ENCODE measurements at regions of chr16 and their contacts with region 1.

Region 1: GRCh38 chr16:3173892-3174617 is 13.9 kb upstream of the OR1F1 start:
- DNase-seq: no peak
- H3K4me3 ChIP-seq: no peak overlapping the region
- H3K4me3 Mint-ChIP-seq: peak overlapping the region in 7 of 8 donors; percentile 4 to 58 (median 35)
- H3K27ac ChIP-seq: no peak overlapping the region
- H3K27ac Mint-ChIP-seq: peak overlapping the region in 2 of 7 donors; percentile 17 to 75
- H3K4me1 ChIP-seq: peaks cover 48% of the 10 kb centered on the region
- H3K4me1 Mint-ChIP-seq: peaks cover 18 to 46% (median 35%) of the 10 kb centered on the region in 4 donors
- H3K27me3 ChIP-seq: peaks cover 38% of the 10 kb centered on the region
- H3K27me3 Mint-ChIP-seq: peaks cover 39 to 41% of the 10 kb centered on the region in 2 donors

Region 2: GRCh38 chr16:3023669-3024478 is 150.2 kb before region 1 on chr16 and contains the starts of genes HCFC1R1 and THOC6:
- CTCF ChIA-PET with region 1: interaction called, 25 read pairs
- POLR2A ChIA-PET with region 1: interaction called, 3 read pairs
- intact Hi-C with region 1: no loop called
- DNase-seq: peak; percentile 95 to 97 (median 95)
- H3K4me3 ChIP-seq: peak within 1 kb of the TSS; percentile 38 to 85
- H3K4me3 Mint-ChIP-seq: peak within 1 kb of the TSS; percentile 87 to 97 (median 93)
- H3K27ac ChIP-seq: peak within 1 kb of the TSS; percentile 90
- H3K27ac Mint-ChIP-seq: peak within 1 kb of the TSS; percentile 97 to 99 (median 99)
- H3K4me1 ChIP-seq: peaks cover 56% of the 10 kb centered on the region
- H3K4me1 Mint-ChIP-seq: peaks cover 22 to 67% (median 45%) of the 10 kb centered on the region in 4 donors
- H3K27me3 ChIP-seq: peaks cover 2% of the 10 kb centered on the region
- H3K27me3 Mint-ChIP-seq: no peaks in the 10 kb centered on the region
- total RNA-seq, gene HCFC1R1: 16.0 to 18.0 TPM
- total RNA-seq, gene THOC6: 18.4 to 22.5 TPM

Region 3: DNA sequence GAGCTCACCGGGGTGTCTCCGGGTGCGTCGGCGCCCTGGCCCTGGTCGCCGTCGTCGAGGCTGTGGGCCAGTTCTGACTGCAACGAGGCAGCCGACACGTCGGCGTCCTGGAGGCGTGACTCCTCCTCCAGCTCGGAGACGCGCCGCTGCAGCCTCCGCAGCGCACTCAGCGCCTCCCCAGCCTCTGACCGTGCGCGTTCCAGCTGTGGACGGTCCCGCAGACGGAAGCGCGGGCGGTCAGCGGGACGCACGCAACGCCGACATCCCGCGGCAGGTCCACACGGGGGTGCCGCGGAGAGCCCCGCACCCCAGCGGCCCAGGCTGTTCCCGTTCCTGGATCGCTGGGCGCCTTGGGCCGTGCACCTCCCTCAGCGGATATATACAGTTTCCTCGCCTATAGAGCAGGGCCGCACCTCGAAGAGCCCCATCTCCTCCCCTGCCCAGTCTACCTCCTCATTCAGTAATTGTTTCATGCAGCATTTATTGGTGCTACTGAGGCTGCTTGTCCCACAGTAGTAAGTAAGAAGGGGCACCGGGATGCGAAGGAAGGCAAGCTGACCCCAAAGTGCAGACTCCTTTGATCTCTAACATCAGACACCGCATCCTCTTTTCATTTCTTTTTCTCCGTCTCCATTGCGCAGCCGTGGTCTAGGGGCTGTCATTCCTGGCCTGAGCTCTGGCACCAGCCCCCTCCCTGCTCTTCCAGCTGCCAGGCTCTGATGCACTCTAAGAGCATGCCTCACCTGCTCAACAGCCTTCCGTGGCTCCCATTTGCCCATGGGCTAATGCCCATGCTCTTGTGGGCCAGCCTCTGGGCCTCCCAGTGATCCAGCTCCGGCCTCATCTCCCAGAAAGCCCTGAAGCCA is 144.3 kb before region 1 on chr16:
- CTCF ChIA-PET with region 1: interaction called, 25 read pairs
- POLR2A ChIA-PET with region 1: no interaction called
- intact Hi-C with region 1: no loop called
- DNase-seq: peak in 3 of 5 donors; percentile 36 to 43 (median 37)
- H3K4me3 ChIP-seq: peak overlapping the region in 1 of 2 donors; percentile 41
- H3K4me3 Mint-ChIP-seq: peak overlapping the region; percentile 52 to 88 (median 74)
- H3K27ac ChIP-seq: no peak overlapping the region
- H3K27ac Mint-ChIP-seq: peak overlapping the region in 1 of 7 donors; percentile 81
- H3K4me1 ChIP-seq: peaks cover 25% of the 10 kb centered on the region
- H3K4me1 Mint-ChIP-seq: peaks cover 11 to 32% (median 19%) of the 10 kb centered on the region in 4 donors
- H3K27me3 ChIP-seq: peaks cover 13% of the 10 kb centered on the region
- H3K27me3 Mint-ChIP-seq: peaks cover 22 to 25% of the 10 kb centered on the region in 2 donors

Region 4: GRCh38 chr16:3150346-3151218 is 23.5 kb before region 1 on chr16:
- CTCF ChIA-PET with region 1: interaction called, 15 read pairs
- POLR2A ChIA-PET with region 1: interaction called, 13 read pairs
- intact Hi-C with region 1: no loop called
- DNase-seq: peak; percentile 96 to 99 (median 97)
- H3K4me3 ChIP-seq: peak overlapping the region; percentile 77 to 92
- H3K4me3 Mint-ChIP-seq: peak overlapping the region; percentile 87 to 96 (median 91)
- H3K27ac ChIP-seq: peak overlapping the region; percentile 64
- H3K27ac Mint-ChIP-seq: peak overlapping the region; percentile 87 to 100 (median 95)
- H3K4me1 ChIP-seq: peaks cover 27% of the 10 kb centered on the region
- H3K4me1 Mint-ChIP-seq: peaks cover 22 to 47% (median 26%) of the 10 kb centered on the region in 4 donors
- H3K27me3 ChIP-seq: no peaks in the 10 kb centered on the region
- H3K27me3 Mint-ChIP-seq: peaks cover 3 to 8% of the 10 kb centered on the region in 2 donors

Region 5: DNA sequence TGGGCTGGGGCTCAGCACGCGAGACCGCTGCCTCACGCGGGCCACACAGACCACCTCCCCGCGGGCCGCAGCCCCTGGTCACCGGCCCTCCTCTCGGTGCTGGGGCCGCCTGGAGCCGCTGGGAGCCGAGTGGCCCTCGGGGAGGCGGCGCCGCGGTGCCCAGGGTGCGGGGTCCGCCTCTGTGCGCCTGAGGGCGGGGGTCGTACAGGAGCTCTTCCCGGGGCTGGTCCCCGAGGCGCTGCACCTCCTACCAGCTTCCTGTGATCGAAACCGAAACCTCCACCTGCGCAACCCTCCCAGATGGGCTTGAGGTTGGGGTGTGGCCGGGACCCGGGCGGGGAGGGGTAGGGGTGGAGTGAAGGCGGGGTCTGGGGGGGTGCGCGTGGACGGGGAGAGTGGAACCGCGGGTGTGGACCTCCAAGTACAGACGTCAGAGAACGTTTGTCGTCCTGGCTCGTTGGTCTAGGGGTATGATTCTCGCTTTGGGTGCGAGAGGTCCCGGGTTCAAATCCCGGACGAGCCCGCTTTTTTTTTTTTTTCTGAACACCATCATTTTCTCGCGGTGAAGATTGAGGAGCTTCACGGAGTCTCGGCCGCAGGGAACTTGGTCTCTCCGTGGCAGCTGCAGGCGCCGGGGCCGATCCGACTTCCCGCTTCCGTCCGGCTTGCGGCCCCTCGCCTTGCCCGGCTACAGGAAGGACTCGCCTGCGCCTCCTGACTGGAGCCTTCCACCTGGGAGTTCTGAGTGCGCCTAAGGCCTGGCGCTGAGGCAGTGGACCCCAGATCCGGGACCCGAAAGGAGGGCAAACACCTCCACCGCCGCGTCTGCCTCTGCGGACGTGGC is 15.4 kb before region 1 on chr16:
- CTCF ChIA-PET with region 1: interaction called, 7 read pairs
- POLR2A ChIA-PET with region 1: interaction called, 44 read pairs
- intact Hi-C with region 1: no loop called
- DNase-seq: peak; percentile 92 to 98 (median 94)
- H3K4me3 ChIP-seq: peak overlapping the region; percentile 65 to 66
- H3K4me3 Mint-ChIP-seq: peak overlapping the region; percentile 83 to 96 (median 92)
- H3K27ac ChIP-seq: peak overlapping the region; percentile 62
- H3K27ac Mint-ChIP-seq: peak overlapping the region; percentile 92 to 100 (median 96)
- H3K4me1 ChIP-seq: peaks cover 25% of the 10 kb centered on the region
- H3K4me1 Mint-ChIP-seq: peaks cover 11 to 36% (median 25%) of the 10 kb centered on the region in 4 donors
- H3K27me3 ChIP-seq: no peaks in the 10 kb centered on the region
- H3K27me3 Mint-ChIP-seq: peaks cover 0 to 2% of the 10 kb centered on the region in 2 donors

Region 6: GRCh38 chr16:3188925-3189825 is 15.1 kb after region 1 on chr16:
- CTCF ChIA-PET with region 1: no interaction called
- POLR2A ChIA-PET with region 1: interaction called, 17 read pairs
- intact Hi-C with region 1: loop called (anchors 2 kb)
- DNase-seq: peak in 3 of 5 donors; percentile 44 to 45 (median 44)
- H3K4me3 ChIP-seq: peak overlapping the region; percentile 23 to 44
- H3K4me3 Mint-ChIP-seq: peak overlapping the region; percentile 48 to 84 (median 82)
- H3K27ac ChIP-seq: no peak overlapping the region
- H3K27ac Mint-ChIP-seq: peak overlapping the region; percentile 42 to 90 (median 54)
- H3K4me1 ChIP-seq: peaks cover 44% of the 10 kb centered on the region
- H3K4me1 Mint-ChIP-seq: peaks cover 18 to 49% (median 32%) of the 10 kb centered on the region in 4 donors
- H3K27me3 ChIP-seq: peaks cover 58% of the 10 kb centered on the region
- H3K27me3 Mint-ChIP-seq: peaks cover 45 to 51% of the 10 kb centered on the region in 2 donors

Region 7: DNA sequence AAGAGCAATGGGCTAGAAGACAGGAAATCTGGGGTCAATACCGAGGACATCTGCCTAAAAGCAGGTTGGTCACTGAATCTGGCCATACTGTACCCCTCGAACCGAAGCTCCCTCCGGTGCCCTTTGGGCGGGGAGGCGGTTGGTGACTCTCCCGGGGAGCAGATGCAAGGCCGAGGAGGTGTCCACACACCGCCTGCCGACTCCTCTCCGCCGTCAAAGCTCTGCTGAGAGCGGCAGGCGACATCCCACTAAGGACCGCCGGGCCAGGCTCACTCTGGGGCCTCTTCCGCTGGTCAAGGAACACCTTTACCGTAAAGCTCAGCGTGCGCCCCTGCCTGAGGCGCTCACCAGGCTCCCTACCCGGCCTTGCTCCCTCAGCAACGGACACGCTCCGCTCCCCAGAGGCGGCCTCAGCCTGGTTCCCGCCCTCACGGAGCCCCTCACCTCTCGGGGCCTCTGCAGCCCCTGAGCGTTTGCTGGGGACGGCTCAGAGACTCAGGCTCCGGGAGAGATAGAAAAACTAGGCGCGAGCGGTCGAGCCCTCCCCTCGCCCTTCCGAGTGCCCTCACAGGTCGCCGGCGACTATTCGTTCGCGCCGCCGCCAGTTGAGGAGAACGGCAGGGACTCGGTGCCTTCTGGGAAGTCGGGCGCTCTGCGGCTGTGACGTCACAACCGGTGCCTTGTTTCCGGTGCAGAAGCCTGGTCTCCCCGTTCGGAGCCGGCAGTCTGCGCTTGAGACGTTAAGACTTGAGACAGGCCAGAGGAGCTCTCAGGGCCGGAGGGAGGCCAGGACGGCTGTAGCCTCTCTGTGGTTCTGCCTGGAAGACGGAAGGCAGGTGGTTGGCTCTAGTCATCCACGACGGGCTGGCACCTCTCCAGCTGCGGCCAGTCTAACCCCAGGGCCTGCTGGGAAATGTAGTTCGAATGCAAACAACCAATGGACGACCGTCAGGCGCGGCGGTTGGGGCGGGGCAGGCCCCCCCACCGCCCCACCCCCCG is 60.8 kb after region 1 on chr16 and contains the start of gene ZNF200:
- CTCF ChIA-PET with region 1: no interaction called
- POLR2A ChIA-PET with region 1: interaction called, 17 read pairs
- intact Hi-C with region 1: no loop called
- DNase-seq: peak; percentile 92 to 96 (median 95)
- H3K4me3 ChIP-seq: peak within 1 kb of the TSS; percentile 91 to 94
- H3K4me3 Mint-ChIP-seq: peak within 1 kb of the TSS; percentile 93 to 98 (median 96)
- H3K27ac ChIP-seq: peak within 1 kb of the TSS; percentile 88
- H3K27ac Mint-ChIP-seq: peak within 1 kb of the TSS; percentile 96 to 99 (median 98)
- H3K4me1 ChIP-seq: peaks cover 29% of the 10 kb centered on the region
- H3K4me1 Mint-ChIP-seq: peaks cover 17 to 41% (median 23%) of the 10 kb centered on the region in 4 donors
- H3K27me3 ChIP-seq: no peaks in the 10 kb centered on the region
- H3K27me3 Mint-ChIP-seq: no peaks in the 10 kb centered on the region
- total RNA-seq, gene ZNF200: 27.7 to 29.2 TPM